ENCODE measurements at regions of chr1 and their contacts with region 1.

Region 1: DNA sequence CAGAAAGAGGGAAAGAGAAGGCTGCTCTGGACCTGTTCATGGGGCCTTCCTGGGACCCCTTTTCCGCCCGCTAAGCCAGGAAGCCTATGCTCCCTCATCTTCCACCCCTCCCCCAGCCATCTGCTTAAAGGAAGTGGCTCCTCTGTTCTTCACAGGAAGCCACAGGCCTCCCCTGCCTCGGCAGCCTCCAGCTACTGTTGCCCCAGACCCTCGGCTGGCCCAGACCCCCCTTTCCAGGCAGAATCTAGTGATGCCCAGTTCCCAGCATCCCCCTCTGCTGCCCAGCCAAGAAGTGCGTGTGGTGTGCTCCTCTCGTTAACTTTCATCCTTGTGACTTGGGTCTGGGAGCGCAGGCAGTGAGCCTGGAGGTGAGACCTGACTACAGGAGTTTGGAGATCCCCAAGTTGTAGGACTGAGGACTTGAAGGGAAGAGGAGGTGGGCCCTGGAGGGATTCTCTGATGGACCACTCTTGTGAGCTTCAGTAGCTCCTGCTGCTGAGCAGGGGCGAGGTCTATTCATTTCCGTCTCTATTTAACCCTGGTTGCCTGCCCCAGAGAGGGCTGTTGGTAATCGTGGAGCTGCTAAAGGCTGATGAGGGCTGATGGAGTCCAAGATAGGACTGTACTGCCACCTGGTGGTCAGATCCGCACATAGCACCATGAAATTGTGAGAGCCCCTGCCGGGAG is 9.1 kb downstream of the IFI6 start:
- DNase-seq: peak; percentile 93
- H3K4me3 Mint-ChIP-seq: peak overlapping the region; percentile 53
- H3K27ac Mint-ChIP-seq: peak overlapping the region; percentile 97
- H3K4me1 Mint-ChIP-seq: peaks cover 64% of the 10 kb centered on the region
- H3K27me3 Mint-ChIP-seq: no peaks in the 10 kb centered on the region

Region 2: DNA sequence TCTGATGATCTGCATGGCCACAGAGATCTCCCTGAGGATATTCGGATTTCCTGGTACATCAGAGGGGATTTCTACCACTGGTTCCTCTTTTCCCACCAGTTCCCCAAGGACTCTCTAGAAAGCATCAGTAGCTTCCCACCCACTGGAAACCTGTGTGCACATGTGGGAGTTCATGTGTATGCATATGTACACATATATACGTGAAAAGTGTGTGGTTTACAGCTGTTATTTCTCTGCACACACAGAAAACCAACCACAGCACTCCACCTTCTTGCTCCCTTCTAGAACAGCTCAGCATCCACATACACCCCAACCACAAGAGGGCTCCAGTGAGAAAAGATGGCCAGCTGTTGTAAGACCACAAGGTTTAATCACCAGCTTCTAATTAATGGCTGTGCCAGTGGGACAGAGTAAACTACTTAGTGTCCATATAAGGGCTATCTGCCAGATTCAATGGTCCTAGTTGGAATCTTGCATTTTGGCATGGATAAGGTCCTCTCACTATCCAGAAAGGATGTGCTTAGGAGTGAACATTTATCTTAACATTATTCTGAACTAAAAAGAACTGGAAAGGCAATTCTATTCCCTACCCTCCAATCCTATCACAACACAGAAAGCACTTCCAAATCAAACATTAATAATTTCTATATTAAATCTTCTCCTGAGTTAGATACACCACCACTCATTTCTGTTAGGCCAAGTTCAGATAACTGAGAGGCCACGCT is 246.3 kb before region 1 on chr1:
- CTCF ChIA-PET with region 1: interaction called, 27 read pairs
- POLR2A ChIA-PET with region 1: interaction called, 5 read pairs
- DNase-seq: peak; percentile 63
- H3K4me3 Mint-ChIP-seq: no peak overlapping the region
- H3K27ac Mint-ChIP-seq: peak overlapping the region; percentile 25
- H3K4me1 Mint-ChIP-seq: peaks cover 43% of the 10 kb centered on the region
- H3K27me3 Mint-ChIP-seq: no peaks in the 10 kb centered on the region

Region 3: DNA sequence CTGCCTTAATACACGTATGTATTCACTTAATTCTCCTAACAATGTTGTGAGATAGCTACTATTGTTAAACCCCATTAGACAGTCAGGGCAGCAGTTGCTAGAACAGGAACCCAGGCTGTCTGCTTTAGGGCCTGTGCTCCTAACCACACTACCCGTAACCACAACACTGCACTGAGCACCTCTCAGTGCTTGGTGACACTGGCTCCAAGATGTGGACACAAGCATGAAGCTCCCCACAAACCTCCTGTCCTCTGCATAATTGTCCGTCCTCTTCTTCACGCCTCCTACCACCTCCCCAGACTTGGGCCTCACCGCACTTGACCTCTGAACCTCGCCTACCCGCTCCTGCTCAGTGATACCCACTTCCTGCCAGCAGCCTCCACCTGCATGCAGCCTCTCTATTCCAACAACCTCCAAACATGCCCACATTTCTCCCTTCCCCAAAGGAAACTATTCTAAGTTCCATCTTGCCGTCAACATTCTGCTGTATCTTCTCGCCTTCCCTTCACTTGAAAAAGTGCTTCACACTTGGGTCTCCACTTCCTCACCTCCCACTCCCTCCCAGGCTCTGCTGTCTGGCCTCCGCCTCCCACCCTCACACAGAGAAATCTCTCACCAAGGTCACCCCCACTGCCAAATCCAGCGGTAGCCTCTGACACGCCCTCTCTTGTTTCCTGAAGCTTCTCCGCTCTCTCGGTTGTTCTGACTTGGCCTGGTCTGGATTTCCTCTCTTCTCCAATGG is 44.3 kb before region 1 on chr1:
- CTCF ChIA-PET with region 1: interaction called, 448 read pairs
- POLR2A ChIA-PET with region 1: interaction called, 132 read pairs
- DNase-seq: peak; percentile 73
- H3K4me3 Mint-ChIP-seq: no peak overlapping the region
- H3K27ac Mint-ChIP-seq: peak overlapping the region; percentile 82
- H3K4me1 Mint-ChIP-seq: peaks cover 50% of the 10 kb centered on the region
- H3K27me3 Mint-ChIP-seq: no peaks in the 10 kb centered on the region

Region 4: GRCh38 chr1:27643701-27644625 is 18.9 kb before region 1 on chr1:
- CTCF ChIA-PET with region 1: interaction called, 35 read pairs
- POLR2A ChIA-PET with region 1: interaction called, 24 read pairs
- DNase-seq: peak; percentile 72
- H3K4me3 Mint-ChIP-seq: no peak overlapping the region
- H3K27ac Mint-ChIP-seq: no peak overlapping the region
- H3K4me1 Mint-ChIP-seq: peaks cover 11% of the 10 kb centered on the region
- H3K27me3 Mint-ChIP-seq: peaks cover 2% of the 10 kb centered on the region

Region 5: GRCh38 chr1:27682351-27682944 is 19.6 kb after region 1 on chr1:
- CTCF ChIA-PET with region 1: no interaction called
- POLR2A ChIA-PET with region 1: no interaction called
- DNase-seq: no peak
- H3K4me3 Mint-ChIP-seq: no peak overlapping the region
- H3K27ac Mint-ChIP-seq: no peak overlapping the region
- H3K4me1 Mint-ChIP-seq: no peaks in the 10 kb centered on the region
- H3K27me3 Mint-ChIP-seq: peaks cover 13% of the 10 kb centered on the region

Region 6: DNA sequence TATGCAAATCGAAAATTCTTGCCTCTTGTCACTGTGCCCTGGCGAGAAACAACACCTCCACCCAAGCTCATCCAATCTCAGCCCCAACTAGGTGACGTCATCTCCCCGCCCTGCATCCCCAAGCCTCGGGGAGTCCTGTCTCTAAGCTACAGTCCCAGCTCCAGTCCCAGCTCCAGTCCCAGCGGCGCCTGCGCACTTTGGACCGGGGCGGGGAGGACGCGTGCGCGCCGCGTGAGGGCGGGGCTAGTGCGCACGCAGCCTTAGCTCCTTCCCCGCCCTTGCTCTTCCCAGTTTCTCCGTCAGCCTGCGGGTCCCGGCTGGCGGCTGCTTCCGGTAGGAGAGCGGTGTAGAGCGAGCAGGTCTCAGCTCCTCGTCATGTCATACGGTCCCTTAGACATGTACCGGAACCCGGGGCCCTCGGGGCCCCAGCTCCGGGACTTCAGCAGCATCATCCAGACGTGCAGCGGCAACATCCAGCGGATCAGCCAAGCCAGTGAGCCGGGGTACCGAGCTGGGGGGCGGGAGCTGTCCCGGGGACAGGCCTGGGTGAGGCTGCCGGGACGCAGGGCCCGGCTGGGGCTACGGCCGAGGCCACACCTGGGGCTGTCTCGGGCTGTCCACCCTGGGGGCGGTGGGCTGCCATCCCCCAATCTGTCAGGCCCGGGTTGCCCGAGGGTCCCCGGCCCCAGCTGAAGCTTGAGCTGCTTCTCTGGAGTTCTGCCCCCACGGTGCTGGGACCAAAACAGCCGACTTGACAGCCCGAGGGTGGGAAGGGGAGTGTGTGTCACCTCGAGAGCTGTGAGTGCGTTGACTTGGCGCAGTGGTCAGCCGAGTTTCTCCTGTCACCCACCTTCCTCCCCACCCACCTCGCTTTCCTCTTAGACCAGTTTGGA is 110.3 kb after region 1 on chr1 and contains the start of gene STX12:
- CTCF ChIA-PET with region 1: interaction called, 6 read pairs
- POLR2A ChIA-PET with region 1: interaction called, 11 read pairs
- DNase-seq: peak; percentile 100
- H3K4me3 Mint-ChIP-seq: peak within 1 kb of the TSS; percentile 94
- H3K27ac Mint-ChIP-seq: peak within 1 kb of the TSS; percentile 94
- H3K4me1 Mint-ChIP-seq: peaks cover 33% of the 10 kb centered on the region
- H3K27me3 Mint-ChIP-seq: no peaks in the 10 kb centered on the region
- total RNA-seq, gene STX12: 32.0 to 33.1 TPM